Lower leg skin (tissue), 4 donors: ENCODE measurements at regions of chr5 and their contacts with region 1.

Region 1: GRCh38 chr5:58771796-58772195 is 188.9 kb downstream of the RAB3C start:
- DNase-seq: no peak
- H3K4me3 ChIP-seq: no peak overlapping the region
- CTCF ChIP-seq: no peak
- POLR2A ChIP-seq: no peak

Region 2: GRCh38 chr5:58797021-58797420 is 25.2 kb after region 1 on chr5:
- intact Hi-C with region 1: loop called (anchors 1 kb)
- DNase-seq: no peak
- H3K4me3 ChIP-seq: no peak overlapping the region
- CTCF ChIP-seq: no peak
- POLR2A ChIP-seq: no peak

Region 3: DNA sequence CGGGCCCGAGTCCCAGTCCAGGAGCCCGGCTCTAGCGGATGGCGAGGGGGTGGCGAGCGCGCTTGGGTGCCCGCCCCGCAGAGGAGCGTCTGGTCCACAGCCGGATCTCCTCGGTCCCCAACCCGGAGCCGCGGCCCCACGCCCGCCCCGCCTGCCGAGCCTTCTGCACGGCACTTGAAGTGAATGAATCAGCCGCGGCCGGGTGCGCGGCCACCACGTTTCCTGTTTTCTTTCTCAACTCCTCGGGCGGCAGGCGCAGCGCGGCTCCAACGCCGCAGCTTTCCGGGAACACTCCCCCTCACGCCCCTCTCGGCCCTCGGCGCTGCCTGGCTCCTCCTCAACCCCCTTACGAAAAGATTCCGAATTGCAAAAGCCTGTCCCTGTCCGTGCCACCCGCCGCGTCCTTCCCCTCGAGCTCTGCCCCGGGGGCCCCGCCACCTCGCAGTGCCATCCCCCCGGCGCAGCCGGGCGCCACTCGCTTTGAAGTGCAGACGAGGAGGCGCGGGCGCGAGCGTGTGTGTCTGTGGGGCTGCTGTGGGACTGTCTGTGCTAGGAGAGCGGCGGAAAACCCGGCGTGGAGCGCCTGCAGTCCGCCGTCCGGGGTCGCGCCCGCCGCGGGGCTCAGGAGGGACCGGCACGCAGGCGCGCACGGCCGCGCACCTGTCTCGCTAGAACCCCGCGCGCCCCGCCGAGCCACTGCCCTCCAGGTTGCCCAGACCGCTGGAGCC is 267.7 kb after region 1 on chr5:
- intact Hi-C with region 1: no loop called
- DNase-seq: peak; percentile 73 to 97
- H3K4me3 ChIP-seq: peak overlapping the region; percentile 49
- CTCF ChIP-seq: no peak
- POLR2A ChIP-seq: no peak

Region 4: GRCh38 chr5:59222687-59223521 is 451.1 kb after region 1 on chr5:
- intact Hi-C with region 1: no loop called
- DNase-seq: peak in 1 of 2 donors; percentile 18
- H3K4me3 ChIP-seq: no peak overlapping the region
- CTCF ChIP-seq: no peak
- POLR2A ChIP-seq: no peak

Region 5: GRCh38 chr5:59598547-59598874 is 826.7 kb after region 1 on chr5:
- intact Hi-C with region 1: no loop called
- DNase-seq: no peak
- H3K4me3 ChIP-seq: no peak overlapping the region
- CTCF ChIP-seq: no peak
- POLR2A ChIP-seq: no peak